ENCODE measurements at regions of chr2 and their contacts with region 1.

Region 1: GRCh38 chr2:204665244-204665643 is 120.0 kb downstream of the PARD3B start:
- DNase-seq: no peak
- H3K4me3 ChIP-seq: no peak overlapping the region
- H3K27ac ChIP-seq: peak overlapping the region; percentile 92
- H3K4me1 ChIP-seq: peaks cover 45% of the 10 kb centered on the region
- H3K27me3 ChIP-seq: no peaks in the 10 kb centered on the region
- CTCF ChIP-seq: no peak
- POLR2A ChIP-seq: no peak

Region 2: DNA sequence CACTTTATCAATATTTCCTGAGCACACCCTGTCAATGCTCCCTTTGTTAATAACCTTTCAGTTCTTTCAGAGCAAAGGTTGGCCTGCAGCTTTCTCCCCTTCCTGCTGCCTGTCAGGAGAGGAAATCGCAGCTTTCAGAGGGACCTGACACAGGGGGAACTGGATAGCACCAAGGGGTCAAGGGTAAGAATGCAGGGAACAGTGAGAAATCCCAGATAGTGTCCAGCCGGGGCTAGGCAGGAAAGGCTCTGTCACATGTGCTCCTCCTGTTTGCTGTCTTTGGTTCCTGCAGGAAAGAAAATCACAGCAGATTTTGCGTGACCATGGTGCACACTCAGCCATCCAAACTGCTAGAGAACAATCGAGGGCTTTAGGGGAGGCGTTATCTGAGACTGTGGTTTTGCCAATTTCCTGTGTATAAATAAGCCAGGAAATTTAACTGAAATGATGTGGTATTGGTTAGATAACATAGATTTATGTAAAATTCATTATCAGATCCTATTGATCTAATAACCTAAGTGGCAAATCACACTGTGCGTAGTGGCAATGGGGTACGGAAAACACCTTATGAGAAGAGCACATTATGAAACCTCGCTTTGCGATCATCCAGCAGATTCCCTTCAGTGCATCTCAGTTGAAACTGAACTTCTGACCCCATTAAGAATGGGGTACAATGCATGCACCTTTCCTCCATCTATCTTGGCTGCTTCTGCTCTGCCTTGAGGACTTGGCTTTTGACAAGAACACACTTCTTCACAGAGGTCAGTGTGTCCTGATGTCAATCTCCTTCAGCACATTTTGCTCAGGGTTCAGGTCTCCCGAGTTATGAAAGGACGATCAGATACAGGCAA is 550.7 kb before region 1 on chr2:
- CTCF ChIA-PET with region 1: no interaction called
- POLR2A ChIA-PET with region 1: no interaction called
- dilution Hi-C with region 1: no loop called
- intact Hi-C with region 1: loop called (anchors 2 kb)
- DNase-seq: peak; percentile 99
- H3K4me3 ChIP-seq: peak overlapping the region in 1 of 3 experiments; percentile 11
- H3K27ac ChIP-seq: peak overlapping the region; percentile 86
- H3K4me1 ChIP-seq: peaks cover 77% of the 10 kb centered on the region
- H3K27me3 ChIP-seq: no peaks in the 10 kb centered on the region
- CTCF ChIP-seq: no peak
- POLR2A ChIP-seq: peak; percentile 73

Region 3: GRCh38 chr2:204437815-204438766 is 227.2 kb before region 1 on chr2:
- CTCF ChIA-PET with region 1: no interaction called
- POLR2A ChIA-PET with region 1: no interaction called
- dilution Hi-C with region 1: no loop called
- intact Hi-C with region 1: no loop called
- DNase-seq: peak; percentile 81
- H3K4me3 ChIP-seq: peak overlapping the region in 1 of 3 experiments; percentile 2
- H3K27ac ChIP-seq: no peak overlapping the region
- H3K4me1 ChIP-seq: peaks cover 4% of the 10 kb centered on the region
- H3K27me3 ChIP-seq: no peaks in the 10 kb centered on the region
- CTCF ChIP-seq: no peak
- POLR2A ChIP-seq: no peak

Region 4: GRCh38 chr2:204538182-204539018 is 126.8 kb before region 1 on chr2:
- CTCF ChIA-PET with region 1: no interaction called
- POLR2A ChIA-PET with region 1: no interaction called
- dilution Hi-C with region 1: no loop called
- intact Hi-C with region 1: loop called (anchors 1 kb)
- DNase-seq: peak; percentile 93
- H3K4me3 ChIP-seq: peak overlapping the region in 2 of 3 experiments; percentile 6 to 51
- H3K27ac ChIP-seq: peak overlapping the region; percentile 81
- H3K4me1 ChIP-seq: peaks cover 32% of the 10 kb centered on the region
- H3K27me3 ChIP-seq: no peaks in the 10 kb centered on the region
- CTCF ChIP-seq: no peak
- POLR2A ChIP-seq: no peak

Region 5: DNA sequence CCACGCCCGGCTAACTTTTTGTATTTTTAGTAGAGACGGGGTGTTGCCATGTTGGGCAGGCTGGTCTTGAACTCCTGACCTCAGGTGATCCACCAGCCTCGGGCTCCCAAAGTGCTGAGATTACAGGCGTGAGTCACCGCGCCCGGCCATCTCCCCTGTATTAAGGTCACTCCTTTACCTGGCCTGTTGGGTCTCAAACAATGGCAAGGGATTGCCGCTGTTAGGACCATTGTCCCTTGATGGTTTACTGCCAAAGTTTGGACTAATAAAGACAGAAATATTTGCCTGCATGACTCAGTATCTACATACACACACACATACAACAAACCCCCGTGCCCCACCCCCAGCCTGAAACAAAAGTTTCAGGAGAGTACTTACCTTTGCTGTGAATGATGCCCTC is 103.5 kb before region 1 on chr2:
- CTCF ChIA-PET with region 1: no interaction called
- POLR2A ChIA-PET with region 1: no interaction called
- dilution Hi-C with region 1: no loop called
- intact Hi-C with region 1: no loop called
- DNase-seq: no peak
- H3K4me3 ChIP-seq: no peak overlapping the region
- H3K27ac ChIP-seq: no peak overlapping the region
- H3K4me1 ChIP-seq: no peaks in the 10 kb centered on the region
- H3K27me3 ChIP-seq: no peaks in the 10 kb centered on the region
- CTCF ChIP-seq: no peak
- POLR2A ChIP-seq: no peak

Region 6: DNA sequence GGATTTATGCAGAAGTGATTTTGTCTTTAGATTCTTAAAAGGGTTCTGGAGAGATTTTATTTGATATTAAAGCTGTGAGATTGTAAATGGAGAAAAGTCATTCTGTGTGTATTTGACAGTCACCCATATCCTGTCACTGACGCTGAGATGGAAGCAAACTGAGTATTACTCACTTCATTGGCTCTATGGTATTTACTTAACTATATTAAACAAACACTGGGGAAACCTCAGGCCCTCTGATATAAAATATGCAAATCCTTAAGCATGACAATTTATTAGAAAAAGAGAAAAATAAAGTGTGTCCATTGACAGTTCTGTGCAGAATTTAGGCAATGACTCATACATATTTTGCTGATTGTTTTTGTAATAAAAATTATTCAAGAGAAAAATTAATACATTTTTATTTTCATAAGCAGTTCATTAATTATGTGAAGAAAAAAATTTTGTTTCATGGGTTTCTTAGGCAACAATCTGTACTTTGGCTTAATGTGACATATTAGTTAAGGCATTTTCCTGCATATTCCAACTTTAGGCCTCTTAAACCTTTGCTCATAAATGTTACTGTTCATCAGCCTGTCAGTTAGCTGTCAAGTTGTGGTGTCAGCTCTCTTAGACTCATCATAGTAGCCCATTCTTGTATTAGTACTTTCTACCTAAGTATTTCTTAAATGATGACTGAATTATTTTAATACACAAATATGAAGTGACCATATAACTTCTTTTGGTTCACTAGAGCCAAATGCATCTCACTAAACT is 20.0 kb before region 1 on chr2:
- CTCF ChIA-PET with region 1: no interaction called
- POLR2A ChIA-PET with region 1: interaction called, 7 read pairs
- dilution Hi-C with region 1: no loop called
- intact Hi-C with region 1: loop called (anchors 1 kb)
- DNase-seq: peak; percentile 56
- H3K4me3 ChIP-seq: no peak overlapping the region
- H3K27ac ChIP-seq: peak overlapping the region; percentile 53
- H3K4me1 ChIP-seq: peaks cover 12% of the 10 kb centered on the region
- H3K27me3 ChIP-seq: no peaks in the 10 kb centered on the region
- CTCF ChIP-seq: no peak
- POLR2A ChIP-seq: no peak

Measured in endothelial cell of umbilical vein (primary cell).